Calu3 (cell line): ENCODE measurements at regions of chr2 and their contacts with region 1.

Region 1: DNA sequence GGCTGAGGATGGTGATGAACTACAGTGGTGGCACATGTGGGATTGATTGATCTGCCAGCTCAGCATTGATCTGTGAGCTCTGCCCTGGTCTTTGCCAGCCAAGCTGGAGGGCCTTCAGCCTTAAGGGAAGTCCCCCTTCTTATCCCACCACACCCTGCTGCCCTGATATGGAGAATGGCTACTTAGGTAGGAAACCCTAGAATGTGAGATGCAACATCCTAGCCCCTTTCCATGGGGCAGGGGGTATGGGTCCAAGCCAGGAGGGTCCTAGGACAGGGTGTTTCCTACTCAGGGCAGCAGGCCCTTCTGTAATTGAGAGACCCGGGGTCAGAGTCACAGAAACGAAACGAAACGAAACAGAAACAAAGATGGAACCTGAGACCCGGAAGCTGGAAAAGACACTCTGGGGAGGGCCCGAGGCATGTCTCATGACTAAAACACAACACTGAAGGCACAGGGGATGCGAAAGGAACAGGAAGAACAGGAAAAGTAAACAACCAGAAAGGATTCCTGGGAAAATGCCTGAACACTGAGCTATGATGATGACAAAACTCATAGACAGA is 16.9 kb upstream of the SULT1C2 start:
- DNase-seq: peak; percentile 59
- H3K4me3 Mint-ChIP-seq: peak overlapping the region; percentile 39
- H3K27ac Mint-ChIP-seq: peak overlapping the region; percentile 89
- H3K4me1 Mint-ChIP-seq: peaks cover 54% of the 10 kb centered on the region
- H3K27me3 Mint-ChIP-seq: no peaks in the 10 kb centered on the region
- CTCF ChIP-seq: no peak

Region 2: GRCh38 chr2:108215794-108216211 is 56.0 kb before region 1 on chr2:
- CTCF ChIA-PET with region 1: interaction called, 3 read pairs
- intact Hi-C with region 1: loop called (anchors 5 kb)
- DNase-seq: peak; percentile 54
- H3K4me3 Mint-ChIP-seq: no peak overlapping the region
- H3K27ac Mint-ChIP-seq: no peak overlapping the region
- H3K4me1 Mint-ChIP-seq: no peaks in the 10 kb centered on the region
- H3K27me3 Mint-ChIP-seq: no peaks in the 10 kb centered on the region
- CTCF ChIP-seq: no peak

Region 3: DNA sequence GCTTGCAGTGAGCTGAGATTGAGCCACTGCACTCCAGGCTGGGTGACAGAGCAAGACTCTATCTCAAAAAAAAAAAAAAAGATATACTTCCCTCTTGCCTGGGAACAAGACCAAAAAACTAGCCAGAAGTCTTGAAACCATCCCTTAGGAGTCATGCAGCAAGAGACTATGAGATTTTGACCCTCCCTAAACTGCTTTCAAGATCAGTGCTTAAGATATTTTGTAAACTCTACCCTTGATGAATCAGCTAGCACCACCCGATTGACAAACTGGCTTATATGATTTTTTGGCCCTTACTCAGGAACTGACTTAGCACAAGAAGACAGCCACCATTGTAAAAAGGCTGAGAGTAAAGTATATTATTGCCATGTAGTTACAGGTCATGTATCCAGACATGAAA is 28.2 kb before region 1 on chr2:
- CTCF ChIA-PET with region 1: no interaction called
- intact Hi-C with region 1: no loop called
- DNase-seq: no peak
- H3K4me3 Mint-ChIP-seq: no peak overlapping the region
- H3K27ac Mint-ChIP-seq: no peak overlapping the region
- H3K4me1 Mint-ChIP-seq: no peaks in the 10 kb centered on the region
- H3K27me3 Mint-ChIP-seq: no peaks in the 10 kb centered on the region
- CTCF ChIP-seq: no peak

Region 4: GRCh38 chr2:108288534-108289106 is 16.8 kb after region 1 on chr2 and contains the start of gene SULT1C2:
- CTCF ChIA-PET with region 1: no interaction called
- intact Hi-C with region 1: loop called (anchors 2 kb)
- DNase-seq: peak; percentile 17
- H3K4me3 Mint-ChIP-seq: no peak within 1 kb of the TSS
- H3K27ac Mint-ChIP-seq: no peak within 1 kb of the TSS
- H3K4me1 Mint-ChIP-seq: peaks cover 21% of the 10 kb centered on the region
- H3K27me3 Mint-ChIP-seq: no peaks in the 10 kb centered on the region
- CTCF ChIP-seq: no peak
- total RNA-seq, gene SULT1C2: 2.0 and 5.2 TPM in 2 replicates